ENCODE measurements at regions of chr2 and their contacts with region 1.

Region 1: DNA sequence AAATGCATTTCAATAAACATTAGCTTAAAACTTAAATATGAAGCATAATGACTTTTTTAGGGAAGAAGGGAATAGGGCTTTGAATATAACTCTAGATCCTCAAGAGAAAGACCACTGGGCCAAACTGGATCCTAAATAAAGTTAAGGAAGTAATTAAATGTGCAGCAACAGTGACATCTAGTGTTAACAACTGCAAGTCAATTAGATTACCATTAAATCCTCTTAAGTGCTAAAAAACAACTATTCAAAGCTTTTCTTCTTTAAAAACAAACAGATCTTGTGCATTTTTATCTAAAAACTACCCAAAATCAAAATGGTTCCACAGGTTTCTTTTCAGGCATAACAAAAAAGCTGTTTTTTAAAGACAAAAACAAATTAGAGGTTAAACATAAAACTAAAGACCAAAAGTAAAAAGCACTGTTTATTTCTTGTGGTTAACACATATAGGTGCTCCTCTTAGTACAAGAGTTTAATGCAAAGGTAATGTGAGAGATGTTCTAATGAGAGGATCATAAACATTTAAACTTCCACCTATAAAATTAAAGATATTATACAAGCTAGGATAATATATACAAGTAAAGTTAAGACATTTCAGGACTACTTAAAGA is 111.4 kb downstream of the THADA start:
- DNase-seq: no peak
- H3K4me3 Mint-ChIP-seq: no peak overlapping the region
- H3K27ac Mint-ChIP-seq: no peak overlapping the region
- H3K4me1 Mint-ChIP-seq: peaks cover 26% of the 10 kb centered on the region
- H3K27me3 Mint-ChIP-seq: no peaks in the 10 kb centered on the region

Region 2: DNA sequence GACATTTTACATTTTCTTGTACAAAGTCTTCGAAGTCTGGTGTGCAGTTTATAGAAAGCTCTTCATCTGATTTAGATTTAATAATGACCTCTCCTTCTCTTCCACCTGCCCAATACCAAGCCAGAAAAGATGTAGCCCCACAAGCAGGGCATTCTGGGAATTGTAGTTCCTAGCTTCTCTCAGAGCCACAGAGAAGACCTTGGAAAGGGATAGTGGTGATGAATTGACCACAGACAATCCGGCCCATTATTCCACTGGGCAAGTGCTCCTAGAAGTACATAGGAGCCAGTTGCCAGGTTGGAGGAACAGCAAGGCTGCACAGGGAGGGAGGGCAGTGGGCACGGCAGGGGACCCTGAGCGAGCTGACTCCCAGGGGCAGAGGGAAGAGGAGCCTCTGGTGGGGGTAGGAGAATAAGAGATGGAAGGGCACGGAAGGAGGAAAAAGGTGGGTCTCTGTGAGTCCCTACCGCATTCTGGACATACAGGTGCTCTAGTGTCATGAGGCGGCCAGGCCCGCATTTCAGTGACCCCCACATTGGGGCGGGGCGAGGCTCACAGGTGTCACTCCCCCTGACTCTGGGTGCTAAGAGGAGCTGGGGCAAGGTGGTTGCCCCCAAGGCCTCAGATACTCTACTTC is 539.5 kb before region 1 on chr2:
- intact Hi-C with region 1: loop called (anchors 2 kb)
- DNase-seq: no peak
- H3K4me3 Mint-ChIP-seq: no peak overlapping the region
- H3K27ac Mint-ChIP-seq: no peak overlapping the region
- H3K4me1 Mint-ChIP-seq: peaks cover 3% of the 10 kb centered on the region
- H3K27me3 Mint-ChIP-seq: peaks cover 2% of the 10 kb centered on the region

Region 3: GRCh38 chr2:43251171-43251731 is 233.2 kb before region 1 on chr2:
- intact Hi-C with region 1: loop called (anchors 5 kb)
- DNase-seq: no peak
- H3K4me3 Mint-ChIP-seq: no peak overlapping the region
- H3K27ac Mint-ChIP-seq: no peak overlapping the region
- H3K4me1 Mint-ChIP-seq: peaks cover 3% of the 10 kb centered on the region
- H3K27me3 Mint-ChIP-seq: no peaks in the 10 kb centered on the region

Region 4: DNA sequence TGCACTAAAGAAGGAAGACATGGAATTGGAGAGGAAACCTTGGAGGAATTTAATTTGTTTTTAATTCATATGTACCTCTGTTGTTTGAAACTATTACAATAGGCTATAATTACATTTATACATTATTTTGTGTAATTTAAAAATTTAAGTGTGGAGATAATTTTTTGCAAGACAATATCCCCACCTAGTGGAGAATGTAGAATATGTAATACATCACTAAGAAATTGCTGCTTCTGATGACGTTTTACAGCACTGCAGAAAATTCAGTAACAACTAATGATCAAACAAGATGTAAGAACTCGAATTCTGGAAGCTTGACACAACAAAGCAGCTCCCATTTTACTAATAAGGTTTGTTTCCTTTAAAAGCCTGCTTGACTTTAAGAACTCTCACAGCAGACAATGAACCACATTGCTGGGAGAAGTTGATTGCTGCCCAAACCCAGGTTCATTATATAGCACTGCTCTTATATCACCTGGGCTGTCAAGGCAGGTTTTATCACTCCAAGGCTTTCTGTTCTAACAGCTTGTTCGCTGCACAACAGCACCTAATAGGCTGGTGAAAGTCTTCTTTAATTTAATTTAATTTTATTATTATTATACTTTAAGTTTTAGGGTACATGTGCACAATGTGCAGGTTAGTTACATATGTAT is 58.0 kb after region 1 on chr2:
- intact Hi-C with region 1: loop called (anchors 2 kb)
- DNase-seq: no peak
- H3K4me3 Mint-ChIP-seq: no peak overlapping the region
- H3K27ac Mint-ChIP-seq: no peak overlapping the region
- H3K4me1 Mint-ChIP-seq: peaks cover 19% of the 10 kb centered on the region
- H3K27me3 Mint-ChIP-seq: no peaks in the 10 kb centered on the region

Region 5: GRCh38 chr2:44033947-44034346 is 549.5 kb after region 1 on chr2:
- intact Hi-C with region 1: no loop called
- DNase-seq: no peak
- H3K4me3 Mint-ChIP-seq: no peak overlapping the region
- H3K27ac Mint-ChIP-seq: no peak overlapping the region
- H3K4me1 Mint-ChIP-seq: no peaks in the 10 kb centered on the region
- H3K27me3 Mint-ChIP-seq: peaks cover 20% of the 10 kb centered on the region

Measured in activated T-helper 2 cell treated with anti-CD3 and anti-CD28 coated beads, Interferon-gamma antibody, Interleukin-2, Interleukin-4, amounts not matched to agents 10 μg/mL and 5 μg/mL and 100 μg/mL, durations not matched to agents 14 hours and 24 hours and 36 hours (primary cell).